Mucosa of descending colon (tissue), 3 donors: ENCODE measurements at regions of chr1 and their contacts with region 1.

Region 1: GRCh38 chr1:27992276-27992675 is 32.5 kb downstream of the XKR8 start:
- DNase-seq: peak in 2 of 3 donors; percentile 24 to 58
- ATAC-seq: peak; percentile 67
- H3K4me3 ChIP-seq: no peak overlapping the region
- H3K4me1 ChIP-seq: no peaks in the 10 kb centered on the region
- CTCF ChIP-seq: no peak

Region 2: DNA sequence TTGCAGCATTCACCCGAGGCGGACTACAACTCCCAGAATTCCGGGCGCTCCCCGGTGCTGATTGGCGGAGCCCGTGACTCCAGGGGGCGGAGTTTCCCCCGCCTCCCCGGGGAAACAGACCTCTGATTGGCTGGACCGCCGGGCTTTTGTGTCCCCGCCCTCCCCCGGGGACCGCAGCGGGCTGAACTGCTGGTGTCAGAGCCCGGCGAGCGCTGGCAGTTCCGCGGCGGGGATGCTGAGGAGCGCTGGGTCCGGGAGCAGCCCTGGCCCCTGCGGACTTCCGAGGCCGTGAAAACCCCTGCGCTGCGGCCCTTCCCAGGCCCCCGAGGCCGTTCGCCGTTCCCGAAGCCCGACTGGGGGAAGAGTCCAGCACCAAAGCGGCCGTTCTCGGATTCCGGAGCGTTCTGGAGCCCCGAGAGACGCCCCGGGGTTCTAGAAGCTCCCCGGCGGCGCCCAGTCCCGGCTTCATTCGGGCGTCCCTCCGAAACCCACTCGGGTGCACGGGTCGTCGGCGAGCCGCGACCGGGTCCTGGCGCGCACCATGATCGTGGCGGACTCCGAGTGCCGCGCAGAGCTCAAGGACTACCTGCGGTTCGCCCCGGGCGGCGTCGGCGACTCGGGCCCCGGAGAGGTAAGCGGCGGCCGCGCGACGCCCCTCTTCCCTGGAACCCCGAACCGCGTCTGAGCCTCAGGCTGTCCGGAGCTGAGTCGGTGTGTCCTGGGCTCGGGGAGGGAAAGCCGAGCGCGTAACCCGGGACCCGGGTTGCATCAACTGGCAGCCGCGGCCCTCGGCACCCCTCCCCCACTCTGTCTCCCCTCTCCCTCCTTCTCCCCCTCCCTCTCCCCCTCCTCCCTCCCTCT is 267.3 kb after region 1 on chr1 and contains the start of gene SESN2:
- intact Hi-C with region 1: no loop called
- DNase-seq: peak; percentile 99 to 100 (median 99)
- ATAC-seq: peak; percentile 97
- H3K4me3 ChIP-seq: peak within 1 kb of the TSS; percentile 97
- H3K4me1 ChIP-seq: peaks cover 32% of the 10 kb centered on the region
- CTCF ChIP-seq: peak; percentile 4
- total RNA-seq, gene SESN2: 20.4 to 32.3 (median 27.6) TPM

Region 3: DNA sequence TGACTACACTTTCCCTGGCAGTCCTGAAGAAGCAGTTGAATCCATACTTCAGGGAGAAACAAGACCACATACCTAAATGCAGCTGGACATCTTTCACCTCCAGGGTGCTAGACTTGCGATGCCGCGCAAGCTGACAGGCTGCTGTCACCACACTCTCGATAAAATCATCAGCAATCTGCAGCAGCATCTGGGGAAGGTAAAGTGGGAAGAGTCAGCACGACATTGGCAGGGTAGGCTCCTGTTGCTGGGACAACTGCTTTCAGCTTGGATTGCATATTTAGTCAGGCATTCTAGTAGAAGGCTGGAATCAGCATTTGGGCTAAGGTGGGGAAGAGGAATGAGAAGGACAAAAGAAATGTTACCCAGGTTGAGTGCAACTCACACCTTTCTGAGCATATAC is 620.9 kb after region 1 on chr1:
- intact Hi-C with region 1: loop called in 1 of 2 experiments (anchors 10 kb)
- DNase-seq: no peak
- ATAC-seq: no peak
- H3K4me3 ChIP-seq: no peak overlapping the region
- H3K4me1 ChIP-seq: no peaks in the 10 kb centered on the region
- CTCF ChIP-seq: no peak